SK-MEL-5 (cell line): ENCODE measurements at regions of chr3 and their contacts with region 1.

Region 1: DNA sequence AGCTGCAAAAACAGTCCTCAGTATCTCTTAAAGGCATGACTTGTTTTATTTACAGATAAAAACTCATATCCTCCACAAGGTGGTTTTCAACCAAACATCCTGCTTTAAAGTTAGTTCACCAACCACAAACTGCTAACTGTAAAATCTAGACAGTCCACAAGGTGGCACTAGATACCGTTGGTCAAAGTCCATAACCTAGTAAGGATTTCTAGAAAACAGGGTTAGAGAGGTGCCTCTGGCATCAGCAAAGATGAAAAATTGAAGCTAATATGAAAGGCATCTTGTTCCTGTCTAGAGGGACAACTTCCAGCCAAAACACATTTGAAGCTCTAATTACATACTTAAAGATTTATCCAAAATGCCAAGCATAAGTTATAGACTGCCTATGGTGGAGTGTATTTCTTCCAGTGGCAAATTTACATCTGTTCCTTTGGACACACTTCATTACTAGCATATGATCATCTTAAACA is 56.0 kb downstream of the ZMAT3 start:
- DNase-seq: peak; percentile 90

Region 2: DNA sequence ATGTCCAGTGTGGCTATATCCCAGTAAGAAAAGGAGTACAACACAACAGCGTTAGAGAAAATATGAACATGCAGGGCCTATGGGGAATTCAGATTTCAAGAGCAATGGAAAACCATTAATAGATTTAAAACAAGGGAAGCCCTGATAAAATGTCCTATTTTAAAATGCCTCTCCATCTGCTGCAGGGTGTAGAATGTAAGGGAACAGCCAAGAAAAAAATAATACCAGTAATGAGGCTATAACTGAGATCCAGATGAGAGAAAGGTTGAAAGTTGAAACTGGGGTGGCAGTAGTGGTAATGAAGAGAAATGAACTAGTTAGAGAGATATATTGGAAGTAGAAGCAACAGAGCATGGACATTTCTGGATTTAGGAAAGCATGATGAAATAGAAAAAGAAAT is 253.2 kb before region 1 on chr3:
- in situ Hi-C with region 1: no loop called
- DNase-seq: no peak

Region 3: DNA sequence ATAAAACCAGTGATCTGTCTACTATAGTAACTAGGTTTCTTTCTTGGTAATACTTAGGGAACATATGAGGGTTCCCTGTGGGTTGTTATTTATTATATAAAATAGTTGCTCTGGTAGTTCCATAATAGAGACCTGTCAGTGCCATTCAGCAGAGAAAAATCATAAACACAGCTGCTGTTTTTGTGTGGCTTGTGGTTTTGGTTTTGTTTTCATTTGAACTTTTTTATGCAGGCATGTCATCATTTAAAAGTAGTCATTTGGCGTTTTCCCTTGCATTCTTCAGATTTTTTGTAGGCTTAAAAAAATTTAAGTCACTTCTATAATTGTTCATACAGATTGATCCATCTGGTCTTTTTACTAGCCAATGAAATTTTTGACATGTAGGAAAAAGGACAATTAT is 180.5 kb after region 1 on chr3:
- in situ Hi-C with region 1: no loop called
- DNase-seq: no peak

Region 4: GRCh38 chr3:179322286-179323196 is 307.0 kb after region 1 on chr3 and contains the start of gene ZNF639:
- in situ Hi-C with region 1: loop called (anchors 25 kb)
- DNase-seq: peak; percentile 79
- total RNA-seq, gene ZNF639: 39.2 and 39.3 TPM in 2 replicates